ENCODE measurements at regions of chr17 and their contacts with region 1.

Region 1: DNA sequence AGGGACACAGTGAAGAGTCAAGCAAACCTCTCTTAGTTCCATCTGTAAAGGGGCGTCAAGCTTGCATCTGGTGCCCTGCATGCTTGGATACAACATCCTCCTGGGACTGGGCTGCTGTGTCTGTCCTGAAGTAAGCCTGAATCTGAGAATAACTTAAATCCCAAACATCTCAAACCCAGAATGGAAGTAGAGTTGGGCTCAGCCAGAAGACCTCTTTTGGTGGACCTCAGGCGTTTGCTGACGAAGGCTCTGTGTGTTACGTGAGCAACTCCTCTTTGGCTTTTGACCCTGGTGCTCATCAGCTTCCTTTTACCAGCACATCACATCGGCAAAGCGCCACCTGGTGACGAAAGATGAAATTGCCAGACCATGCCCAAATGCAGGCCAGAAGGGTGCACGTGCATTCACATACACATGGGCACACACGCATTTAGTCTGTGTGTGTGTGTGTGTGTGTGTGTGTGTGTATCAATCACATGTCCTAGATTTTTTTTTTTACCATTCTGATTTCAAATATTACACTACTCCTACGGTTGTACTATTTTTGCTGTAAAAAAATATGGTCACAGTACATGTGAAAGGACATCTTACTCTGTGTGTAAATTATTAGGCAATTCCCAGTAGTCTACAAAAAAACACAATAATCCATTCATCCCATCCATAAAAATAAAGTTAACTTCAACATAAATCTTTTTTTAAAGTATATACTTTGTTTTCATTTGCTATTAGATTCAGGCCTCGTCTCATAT is 41.1 kb upstream of the FOXJ1 start:
- DNase-seq: peak; percentile 93
- H3K4me3 ChIP-seq: no peak overlapping the region
- H3K27ac ChIP-seq: no peak overlapping the region
- H3K4me1 ChIP-seq: no peaks in the 10 kb centered on the region
- H3K27me3 ChIP-seq: no peaks in the 10 kb centered on the region
- CTCF ChIP-seq: peak; percentile 94

Region 2: GRCh38 chr17:76014184-76014924 is 167.8 kb before region 1 on chr17:
- CTCF ChIA-PET with region 1: interaction called, 8 read pairs
- POLR2A ChIA-PET with region 1: no interaction called
- intact Hi-C with region 1: loop called (anchors 5 kb)
- DNase-seq: peak; percentile 81
- H3K4me3 ChIP-seq: peak overlapping the region; percentile 13
- H3K27ac ChIP-seq: no peak overlapping the region
- H3K4me1 ChIP-seq: peaks cover 4% of the 10 kb centered on the region
- H3K27me3 ChIP-seq: no peaks in the 10 kb centered on the region
- CTCF ChIP-seq: peak; percentile 98

Region 3: GRCh38 chr17:76121932-76122430 is 60.2 kb before region 1 on chr17:
- CTCF ChIA-PET with region 1: interaction called, 36 read pairs
- POLR2A ChIA-PET with region 1: no interaction called
- intact Hi-C with region 1: loop called (anchors 1 kb)
- DNase-seq: no peak
- H3K4me3 ChIP-seq: no peak overlapping the region
- H3K27ac ChIP-seq: peak overlapping the region; percentile 61
- H3K4me1 ChIP-seq: no peaks in the 10 kb centered on the region
- H3K27me3 ChIP-seq: no peaks in the 10 kb centered on the region
- CTCF ChIP-seq: no peak

Region 4: GRCh38 chr17:76199469-76199868 is 17.3 kb after region 1 on chr17:
- CTCF ChIA-PET with region 1: interaction called, 13 read pairs
- POLR2A ChIA-PET with region 1: no interaction called
- intact Hi-C with region 1: no loop called
- DNase-seq: no peak
- H3K4me3 ChIP-seq: no peak overlapping the region
- H3K27ac ChIP-seq: no peak overlapping the region
- H3K4me1 ChIP-seq: no peaks in the 10 kb centered on the region
- H3K27me3 ChIP-seq: no peaks in the 10 kb centered on the region
- CTCF ChIP-seq: no peak